ENCODE measurements at regions of chr14 and their contacts with region 1.

Region 1: DNA sequence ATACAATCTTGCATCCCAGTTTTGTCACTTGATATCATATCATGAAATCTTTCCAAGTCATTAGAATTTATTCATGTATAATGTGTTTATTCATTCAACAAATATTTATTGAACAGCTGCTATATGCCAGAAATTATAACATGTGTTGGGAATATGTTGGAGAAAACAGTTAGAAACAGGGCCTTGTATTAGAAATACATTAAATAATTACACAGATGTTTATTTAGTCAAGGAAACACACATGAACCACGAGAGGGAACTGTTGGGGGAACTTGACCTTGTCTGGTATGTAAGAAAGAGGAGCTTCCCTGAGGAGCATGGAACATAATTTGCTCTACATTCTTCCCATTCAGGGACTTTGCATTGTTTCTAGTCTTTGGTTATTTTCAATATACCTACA is 191.7 kb upstream of the FRMD6 start:
- DNase-seq: no peak
- ATAC-seq: no peak
- H3K4me3 ChIP-seq: no peak overlapping the region
- H3K27ac ChIP-seq: no peak overlapping the region
- H3K4me1 ChIP-seq: peaks cover 0 to 6% (median 0%) of the 10 kb centered on the region in 3 donors
- H3K27me3 ChIP-seq: no peaks in the 10 kb centered on the region
- CTCF ChIP-seq: no peak

Region 2: GRCh38 chr14:51056421-51056820 is 403.6 kb before region 1 on chr14:
- intact Hi-C with region 1: no loop called
- DNase-seq: no peak
- ATAC-seq: no peak
- H3K4me3 ChIP-seq: no peak overlapping the region
- H3K27ac ChIP-seq: no peak overlapping the region
- H3K4me1 ChIP-seq: no peaks in the 10 kb centered on the region
- H3K27me3 ChIP-seq: no peaks in the 10 kb centered on the region
- CTCF ChIP-seq: no peak

Region 3: GRCh38 chr14:51342241-51342691 is 117.7 kb before region 1 on chr14:
- intact Hi-C with region 1: no loop called
- DNase-seq: no peak
- ATAC-seq: peak in 3 of 4 donors; percentile 54 to 73 (median 64)
- H3K4me3 ChIP-seq: no peak overlapping the region
- H3K27ac ChIP-seq: peak overlapping the region in 2 of 4 donors; percentile 4 to 39
- H3K4me1 ChIP-seq: no peaks in the 10 kb centered on the region
- H3K27me3 ChIP-seq: no peaks in the 10 kb centered on the region
- CTCF ChIP-seq: no peak

Region 4: DNA sequence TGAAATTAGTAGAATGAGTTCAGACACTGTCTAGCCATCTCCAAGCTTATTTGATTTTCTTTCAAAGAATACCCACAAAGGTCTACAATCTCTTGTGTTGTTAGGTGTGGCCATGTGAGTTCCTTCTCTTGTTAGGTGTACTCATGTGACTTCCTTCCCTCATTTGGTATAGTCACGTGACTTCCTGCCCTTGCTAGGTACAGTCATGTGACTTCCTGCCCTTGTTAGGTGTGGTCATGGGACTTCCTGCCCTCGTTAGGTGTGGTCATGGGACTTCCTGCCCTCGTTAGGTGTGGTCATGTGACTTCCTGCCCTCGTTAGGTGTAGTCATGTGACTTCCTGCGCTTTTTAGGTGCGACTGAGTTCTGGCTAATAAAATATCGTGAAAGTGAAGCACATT is 40.3 kb before region 1 on chr14:
- intact Hi-C with region 1: loop called in 1 of 3 experiments (anchors 10 kb)
- DNase-seq: no peak
- ATAC-seq: no peak
- H3K4me3 ChIP-seq: no peak overlapping the region
- H3K27ac ChIP-seq: no peak overlapping the region
- H3K4me1 ChIP-seq: no peaks in the 10 kb centered on the region
- H3K27me3 ChIP-seq: no peaks in the 10 kb centered on the region
- CTCF ChIP-seq: no peak

Region 5: GRCh38 chr14:51666826-51667225 is 206.8 kb after region 1 on chr14:
- intact Hi-C with region 1: no loop called
- DNase-seq: no peak
- ATAC-seq: no peak
- H3K4me3 ChIP-seq: no peak overlapping the region
- H3K27ac ChIP-seq: no peak overlapping the region
- H3K4me1 ChIP-seq: no peaks in the 10 kb centered on the region
- H3K27me3 ChIP-seq: no peaks in the 10 kb centered on the region
- CTCF ChIP-seq: no peak

Measured in pancreas (tissue), 10 donors.